ENCODE measurements at regions of chr22 and their contacts with region 1.

Region 1: DNA sequence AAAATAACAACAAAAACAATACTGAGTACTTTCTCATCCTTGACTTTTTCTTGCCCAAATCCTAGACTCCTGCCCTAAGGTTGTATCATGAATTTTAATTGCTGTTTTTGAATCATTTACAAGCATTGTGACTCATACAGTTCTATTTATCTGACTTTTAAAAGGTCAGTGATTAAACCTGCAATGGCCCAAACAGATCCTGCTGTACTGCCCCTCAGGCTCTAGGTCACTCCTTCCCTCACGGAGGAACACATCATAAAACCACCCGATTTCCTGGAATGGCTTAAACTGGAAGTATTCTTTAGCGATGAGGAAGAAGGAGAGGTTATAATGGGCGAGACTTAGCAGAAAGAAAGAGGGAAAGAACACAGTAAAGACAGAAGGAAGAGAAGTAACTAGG is 12.3 kb downstream of the ARFGAP3 start:
- DNase-seq: no peak
- H3K4me3 ChIP-seq: no peak overlapping the region
- CTCF ChIP-seq: no peak

Region 2: GRCh38 chr22:42856865-42857704 is 12.3 kb after region 1 on chr22 and contains the start of gene ARFGAP3:
- CTCF ChIA-PET with region 1: interaction called, 5 read pairs
- POLR2A ChIA-PET with region 1: interaction called, 11 read pairs
- DNase-seq: peak; percentile 33
- H3K4me3 ChIP-seq: peak within 1 kb of the TSS; percentile 90
- CTCF ChIP-seq: no peak

Measured in AG04449 (cell line).